ENCODE measurements at regions of chr1 and their contacts with region 1.

Region 1: DNA sequence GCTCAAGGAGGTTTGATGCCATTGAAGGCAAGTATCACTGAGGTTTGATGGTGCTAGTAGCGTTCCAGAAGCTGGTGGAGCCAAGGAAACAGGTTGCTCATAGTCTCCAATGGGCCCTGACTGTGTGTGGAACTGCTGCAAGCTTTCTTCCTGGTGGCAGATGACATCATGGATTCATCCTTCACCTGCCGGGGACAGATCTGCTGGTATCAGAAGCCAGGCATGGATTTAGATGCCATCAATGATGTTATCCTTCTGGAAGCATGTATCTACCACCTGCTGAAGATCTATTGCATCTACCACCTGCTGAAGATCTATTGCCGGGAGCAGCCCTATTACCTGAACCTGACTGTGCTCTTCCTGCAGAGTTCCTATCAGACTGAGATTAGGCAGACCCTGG is 734.4 kb downstream of the PLA2G4A start:
- DNase-seq: no peak
- ATAC-seq: no peak

Region 2: GRCh38 chr1:187577610-187578009 is 14.4 kb after region 1 on chr1:
- intact Hi-C with region 1: loop called in 1 of 2 experiments (anchors 2 kb)
- DNase-seq: no peak
- ATAC-seq: no peak

Region 3: DNA sequence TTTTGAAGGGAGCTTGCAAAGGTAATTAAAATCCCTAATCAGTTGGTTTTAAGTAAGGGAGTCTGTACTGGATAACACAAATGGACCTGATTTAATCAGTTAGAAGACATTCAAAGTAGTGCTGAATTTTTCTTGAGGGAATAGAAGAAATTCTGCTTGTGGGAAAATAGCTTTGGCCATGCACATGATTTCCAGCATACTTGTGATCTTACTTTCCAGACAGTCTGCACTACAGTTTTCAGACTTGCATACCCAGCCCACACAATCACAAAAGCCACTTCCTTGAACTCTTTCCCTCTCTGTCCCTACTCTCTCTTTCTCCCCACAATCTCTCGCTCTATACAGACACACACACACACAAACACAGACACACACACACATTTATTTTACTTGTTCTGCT is 117.6 kb after region 1 on chr1:
- intact Hi-C with region 1: no loop called
- DNase-seq: no peak
- ATAC-seq: no peak